Esophagus muscularis mucosa (tissue), 4 donors: ENCODE measurements at regions of chr7 and their contacts with region 1.

Region 1: DNA sequence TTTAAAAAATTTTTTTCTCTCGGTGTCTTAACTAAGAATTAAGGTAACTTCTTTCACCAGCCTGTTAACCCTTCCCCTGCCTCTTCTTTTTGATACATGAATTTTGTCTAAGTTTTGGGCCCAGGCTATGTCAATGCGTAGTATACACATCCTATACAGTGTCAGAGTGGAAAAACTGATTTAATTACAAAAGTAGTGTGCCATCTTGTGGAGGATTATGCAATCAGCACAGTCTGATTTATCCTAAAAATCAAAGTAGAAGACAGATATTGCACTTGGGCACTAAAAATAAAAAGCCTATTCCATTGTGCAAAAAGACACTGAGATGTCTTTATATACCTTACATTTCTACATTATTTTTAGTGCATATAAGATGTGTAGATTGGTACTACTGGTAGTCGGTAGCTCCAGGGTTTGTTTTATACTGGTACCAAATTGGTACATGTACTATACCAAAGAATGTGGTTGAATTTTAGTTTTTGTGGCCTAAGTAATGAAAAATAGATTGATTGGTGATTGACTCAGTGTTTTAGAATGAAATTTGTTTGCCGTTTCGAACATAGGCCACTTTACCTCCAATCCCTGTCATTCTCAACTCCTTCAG is 96.6 kb downstream of the MKLN1 start:
- DNase-seq: no peak
- H3K4me3 ChIP-seq: no peak overlapping the region
- H3K27ac ChIP-seq: peak overlapping the region in 1 of 4 donors; percentile 26
- H3K4me1 ChIP-seq: peaks cover 11 to 40% (median 27%) of the 10 kb centered on the region in 4 donors
- H3K27me3 ChIP-seq: no peaks in the 10 kb centered on the region
- CTCF ChIP-seq: peak; percentile 64 to 69 (median 69)
- EP300 ChIP-seq: no peak
- POLR2A ChIP-seq: no peak

Region 2: GRCh38 chr7:131071786-131072504 is 352.4 kb before region 1 on chr7:
- intact Hi-C with region 1: loop called (anchors 5 kb)
- DNase-seq: no peak
- H3K4me3 ChIP-seq: peak overlapping the region in 3 of 4 donors; percentile 3 to 19 (median 10)
- H3K27ac ChIP-seq: peak overlapping the region; percentile 18 to 68 (median 56)
- H3K4me1 ChIP-seq: peaks cover 50 to 97% (median 86%) of the 10 kb centered on the region in 4 donors
- H3K27me3 ChIP-seq: no peaks in the 10 kb centered on the region
- CTCF ChIP-seq: peak in 2 of 3 experiments; percentile 33 to 50
- EP300 ChIP-seq: no peak
- POLR2A ChIP-seq: no peak

Region 3: DNA sequence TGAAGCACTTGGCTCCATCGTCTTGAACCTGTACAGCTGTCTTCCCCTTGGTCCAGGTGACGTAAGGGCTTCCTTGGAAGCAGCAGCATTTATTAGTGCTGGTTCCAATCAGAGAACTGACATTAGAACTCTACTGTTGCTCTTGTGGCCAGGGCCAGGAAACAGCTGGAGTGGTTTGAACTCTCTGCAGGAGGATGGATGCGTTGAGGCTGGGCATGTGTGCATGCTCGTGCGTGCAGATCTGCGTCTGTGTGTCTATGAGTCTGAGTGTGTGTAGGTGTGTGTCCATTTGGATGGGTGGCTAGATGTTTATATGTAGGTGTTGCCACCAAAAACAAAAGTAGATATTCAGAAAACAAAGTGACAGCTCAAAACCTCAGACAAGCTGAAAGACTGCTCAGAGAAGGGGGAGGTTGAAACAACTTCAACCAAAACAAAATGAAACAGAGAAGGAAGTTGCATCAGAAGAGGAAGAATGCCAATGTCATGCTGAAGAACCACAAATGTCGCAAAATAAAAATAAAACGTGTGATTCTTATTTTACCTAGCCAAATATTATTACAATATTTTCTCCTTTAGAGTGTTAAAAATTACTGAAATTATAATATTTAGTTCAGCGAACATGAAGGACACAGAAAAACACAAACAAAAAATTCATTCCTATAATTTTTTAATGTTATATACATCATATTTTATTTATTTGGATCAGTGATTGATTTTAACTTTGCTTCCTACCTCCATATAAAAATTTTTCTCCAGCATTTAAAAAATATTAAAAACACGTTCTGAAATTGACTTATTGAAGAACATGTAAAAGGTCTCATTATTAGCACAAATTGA is 192.7 kb before region 1 on chr7:
- intact Hi-C with region 1: no loop called
- DNase-seq: no peak
- H3K4me3 ChIP-seq: no peak overlapping the region
- H3K27ac ChIP-seq: peak overlapping the region; percentile 9 to 55 (median 34)
- H3K4me1 ChIP-seq: peaks cover under 1 to 17% (median 8%) of the 10 kb centered on the region in 4 donors
- H3K27me3 ChIP-seq: no peaks in the 10 kb centered on the region
- CTCF ChIP-seq: no peak
- EP300 ChIP-seq: no peak
- POLR2A ChIP-seq: no peak